ENCODE measurements at regions of chr1 and their contacts with region 1.

Region 1: GRCh38 chr1:175267716-175268384 is 75.3 kb upstream of the KIAA0040 start:
- DNase-seq: no peak
- H3K4me3 Mint-ChIP-seq: no peak overlapping the region
- H3K27ac Mint-ChIP-seq: no peak overlapping the region
- H3K4me1 Mint-ChIP-seq: peaks cover 26% of the 10 kb centered on the region
- H3K27me3 Mint-ChIP-seq: peaks cover 13% of the 10 kb centered on the region
- CTCF ChIP-seq: no peak

Region 2: GRCh38 chr1:174605198-174605597 is 662.7 kb before region 1 on chr1:
- CTCF ChIA-PET with region 1: no interaction called
- intact Hi-C with region 1: no loop called
- DNase-seq: no peak
- H3K4me3 Mint-ChIP-seq: no peak overlapping the region
- H3K27ac Mint-ChIP-seq: no peak overlapping the region
- H3K4me1 Mint-ChIP-seq: no peaks in the 10 kb centered on the region
- H3K27me3 Mint-ChIP-seq: no peaks in the 10 kb centered on the region
- CTCF ChIP-seq: no peak

Region 3: GRCh38 chr1:175192630-175193526 is 75.0 kb before region 1 on chr1 and contains the start of gene KIAA0040:
- CTCF ChIA-PET with region 1: no interaction called
- intact Hi-C with region 1: loop called (anchors 5 kb)
- DNase-seq: peak; percentile 87
- H3K4me3 Mint-ChIP-seq: peak within 1 kb of the TSS; percentile 86
- H3K27ac Mint-ChIP-seq: peak within 1 kb of the TSS; percentile 89
- H3K4me1 Mint-ChIP-seq: peaks cover 49% of the 10 kb centered on the region
- H3K27me3 Mint-ChIP-seq: no peaks in the 10 kb centered on the region
- CTCF ChIP-seq: peak; percentile 13
- total RNA-seq, gene KIAA0040: 24.3 and 33.4 TPM in 2 replicates

Region 4: GRCh38 chr1:175419744-175420546 is 152.1 kb after region 1 on chr1:
- CTCF ChIA-PET with region 1: no interaction called
- intact Hi-C with region 1: no loop called
- DNase-seq: no peak
- H3K4me3 Mint-ChIP-seq: no peak overlapping the region
- H3K27ac Mint-ChIP-seq: no peak overlapping the region
- H3K4me1 Mint-ChIP-seq: peaks cover 6% of the 10 kb centered on the region
- H3K27me3 Mint-ChIP-seq: peaks cover 79% of the 10 kb centered on the region
- CTCF ChIP-seq: no peak

Region 5: GRCh38 chr1:176073524-176074157 is 805.8 kb after region 1 on chr1:
- CTCF ChIA-PET with region 1: no interaction called
- intact Hi-C with region 1: no loop called
- DNase-seq: peak; percentile 53
- H3K4me3 Mint-ChIP-seq: no peak overlapping the region
- H3K27ac Mint-ChIP-seq: no peak overlapping the region
- H3K4me1 Mint-ChIP-seq: no peaks in the 10 kb centered on the region
- H3K27me3 Mint-ChIP-seq: no peaks in the 10 kb centered on the region
- CTCF ChIP-seq: peak; percentile 63